CD4-positive, alpha-beta memory T cell (primary cell): ENCODE measurements at regions of chr19 and their contacts with region 1.

Region 1: DNA sequence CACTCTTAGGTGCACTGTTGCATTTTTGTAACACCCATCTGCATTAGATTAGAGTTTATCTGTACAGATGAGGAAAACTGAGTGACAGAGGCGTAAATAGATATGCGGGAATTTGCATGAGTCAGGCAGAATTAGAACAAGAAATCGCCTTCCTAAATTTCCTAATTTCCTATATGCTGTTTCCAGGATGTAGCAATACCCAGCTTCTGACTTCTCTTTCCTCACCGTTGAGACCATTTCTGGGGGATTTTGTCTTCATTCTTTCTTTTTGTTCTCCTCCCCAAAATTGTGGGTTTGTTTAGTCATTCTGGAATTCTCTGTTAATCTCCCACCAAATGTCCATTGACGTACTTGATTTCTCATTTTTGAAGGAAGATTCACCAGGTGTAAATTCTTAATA is 10.6 kb upstream of the ZNF792 start:
- DNase-seq: no peak
- H3K4me3 ChIP-seq: no peak overlapping the region
- H3K4me3 Mint-ChIP-seq: peak overlapping the region in 1 of 8 donors; percentile 26
- H3K27ac ChIP-seq: no peak overlapping the region
- H3K27ac Mint-ChIP-seq: peak overlapping the region in 1 of 7 donors; percentile 50
- H3K4me1 ChIP-seq: peaks cover 11% of the 10 kb centered on the region
- H3K4me1 Mint-ChIP-seq: peaks cover 9 to 19% (median 13%) of the 10 kb centered on the region in 4 donors
- H3K27me3 ChIP-seq: no peaks in the 10 kb centered on the region
- H3K27me3 Mint-ChIP-seq: peaks cover 0 to 4% of the 10 kb centered on the region in 2 donors

Region 2: GRCh38 chr19:34838753-34839431 is 135.8 kb before region 1 on chr19:
- CTCF ChIA-PET with region 1: interaction called, 3 read pairs
- POLR2A ChIA-PET with region 1: no interaction called
- intact Hi-C with region 1: loop called (anchors 5 kb)
- DNase-seq: peak in 3 of 5 donors; percentile 15 to 29 (median 17)
- H3K4me3 ChIP-seq: no peak overlapping the region
- H3K4me3 Mint-ChIP-seq: peak overlapping the region in 5 of 8 donors; percentile 53 to 73 (median 66)
- H3K27ac ChIP-seq: no peak overlapping the region
- H3K27ac Mint-ChIP-seq: peak overlapping the region in 3 of 7 donors; percentile 42 to 69 (median 52)
- H3K4me1 ChIP-seq: peaks cover 8% of the 10 kb centered on the region
- H3K4me1 Mint-ChIP-seq: peaks cover 10 to 30% (median 18%) of the 10 kb centered on the region in 4 donors
- H3K27me3 ChIP-seq: no peaks in the 10 kb centered on the region
- H3K27me3 Mint-ChIP-seq: peaks cover 0 to 2% of the 10 kb centered on the region in 2 donors

Region 3: GRCh38 chr19:34963573-34964409 is 10.9 kb before region 1 on chr19 and contains the start of gene ZNF792:
- CTCF ChIA-PET with region 1: interaction called, 12 read pairs
- POLR2A ChIA-PET with region 1: interaction called, 3 read pairs
- intact Hi-C with region 1: no loop called
- DNase-seq: peak; percentile 36 to 57 (median 39)
- H3K4me3 ChIP-seq: peak within 1 kb of the TSS; percentile 62 to 80
- H3K4me3 Mint-ChIP-seq: peak within 1 kb of the TSS; percentile 93 to 99 (median 97)
- H3K27ac ChIP-seq: peak within 1 kb of the TSS; percentile 49
- H3K27ac Mint-ChIP-seq: peak within 1 kb of the TSS; percentile 88 to 97 (median 93)
- H3K4me1 ChIP-seq: peaks cover 18% of the 10 kb centered on the region
- H3K4me1 Mint-ChIP-seq: peaks cover 18 to 28% (median 24%) of the 10 kb centered on the region in 4 donors
- H3K27me3 ChIP-seq: no peaks in the 10 kb centered on the region
- H3K27me3 Mint-ChIP-seq: no peaks in the 10 kb centered on the region
- total RNA-seq, gene ZNF792: 33.9 to 34.7 TPM

Region 4: GRCh38 chr19:34999498-35000341 is 25.1 kb after region 1 on chr19 and contains the start of gene GRAMD1A:
- CTCF ChIA-PET with region 1: interaction called, 47 read pairs
- POLR2A ChIA-PET with region 1: interaction called, 14 read pairs
- intact Hi-C with region 1: loop called (anchors 1 kb)
- DNase-seq: peak; percentile 52 to 69 (median 59)
- H3K4me3 ChIP-seq: peak within 1 kb of the TSS; percentile 50 to 83
- H3K4me3 Mint-ChIP-seq: peak within 1 kb of the TSS; percentile 94 to 99 (median 99)
- H3K27ac ChIP-seq: peak within 1 kb of the TSS; percentile 88
- H3K27ac Mint-ChIP-seq: peak within 1 kb of the TSS; percentile 88 to 99 (median 98)
- H3K4me1 ChIP-seq: peaks cover 79% of the 10 kb centered on the region
- H3K4me1 Mint-ChIP-seq: peaks cover 48 to 86% (median 67%) of the 10 kb centered on the region in 4 donors
- H3K27me3 ChIP-seq: no peaks in the 10 kb centered on the region
- H3K27me3 Mint-ChIP-seq: no peaks in the 10 kb centered on the region
- total RNA-seq, gene GRAMD1A: 205 to 221 TPM

Region 5: GRCh38 chr19:35090506-35091237 is 116.0 kb after region 1 on chr19:
- CTCF ChIA-PET with region 1: interaction called, 6 read pairs
- POLR2A ChIA-PET with region 1: no interaction called
- intact Hi-C with region 1: loop called (anchors 1 kb)
- DNase-seq: peak in 4 of 5 donors; percentile 25 to 43 (median 30)
- H3K4me3 ChIP-seq: no peak overlapping the region
- H3K4me3 Mint-ChIP-seq: peak overlapping the region in 1 of 8 donors; percentile 13
- H3K27ac ChIP-seq: no peak overlapping the region
- H3K27ac Mint-ChIP-seq: no peak overlapping the region
- H3K4me1 ChIP-seq: peaks cover 15% of the 10 kb centered on the region
- H3K4me1 Mint-ChIP-seq: peaks cover 3 to 13% (median 5%) of the 10 kb centered on the region in 4 donors
- H3K27me3 ChIP-seq: no peaks in the 10 kb centered on the region
- H3K27me3 Mint-ChIP-seq: peaks cover 6 to 10% of the 10 kb centered on the region in 2 donors

Region 6: DNA sequence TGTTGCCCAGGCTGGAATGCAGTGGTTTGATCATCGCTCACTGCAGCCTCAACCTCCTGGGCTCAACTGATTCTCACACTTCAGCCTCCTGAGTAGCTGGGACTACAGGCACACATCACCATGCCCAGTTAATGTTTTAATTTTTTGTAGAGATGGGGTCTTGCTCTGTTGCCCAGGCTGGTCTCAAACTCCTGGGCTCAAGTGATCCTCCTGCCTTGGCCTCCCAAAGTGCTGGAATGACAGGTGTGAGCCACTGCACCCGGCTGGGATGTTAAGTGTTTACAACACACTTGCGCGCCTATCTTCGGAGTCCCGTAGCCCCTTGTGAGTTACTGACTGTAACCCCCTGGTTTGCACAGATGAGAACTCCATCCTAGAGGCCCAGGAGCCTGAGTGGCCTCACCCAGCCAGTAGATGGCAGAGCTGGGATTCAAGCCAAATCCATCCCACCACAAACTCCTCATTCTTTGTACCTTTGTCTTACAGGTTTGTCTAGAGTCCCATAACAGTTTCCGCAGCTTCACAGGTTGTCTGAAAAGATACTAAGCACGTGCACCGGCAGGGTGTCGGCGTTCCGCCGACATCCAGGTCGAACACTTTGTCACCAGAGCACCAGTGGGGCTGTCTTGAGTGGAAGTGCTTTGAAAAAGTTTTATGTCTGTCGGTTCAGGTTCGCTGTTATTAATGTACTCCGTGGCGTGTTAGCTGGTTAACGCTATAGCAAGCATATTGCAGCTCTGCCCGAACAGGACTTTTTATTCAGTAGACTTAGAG is 332.0 kb after region 1 on chr19:
- CTCF ChIA-PET with region 1: no interaction called
- POLR2A ChIA-PET with region 1: no interaction called
- intact Hi-C with region 1: no loop called
- DNase-seq: no peak
- H3K4me3 ChIP-seq: no peak overlapping the region
- H3K4me3 Mint-ChIP-seq: no peak overlapping the region
- H3K27ac ChIP-seq: no peak overlapping the region
- H3K27ac Mint-ChIP-seq: peak overlapping the region in 2 of 7 donors; percentile 12 to 25
- H3K4me1 ChIP-seq: no peaks in the 10 kb centered on the region
- H3K4me1 Mint-ChIP-seq: no peaks in the 10 kb centered on the region
- H3K27me3 ChIP-seq: no peaks in the 10 kb centered on the region
- H3K27me3 Mint-ChIP-seq: no peaks in the 10 kb centered on the region